T-cell (primary cell): ENCODE measurements at regions of chr5 and their contacts with region 1.

Region 1: DNA sequence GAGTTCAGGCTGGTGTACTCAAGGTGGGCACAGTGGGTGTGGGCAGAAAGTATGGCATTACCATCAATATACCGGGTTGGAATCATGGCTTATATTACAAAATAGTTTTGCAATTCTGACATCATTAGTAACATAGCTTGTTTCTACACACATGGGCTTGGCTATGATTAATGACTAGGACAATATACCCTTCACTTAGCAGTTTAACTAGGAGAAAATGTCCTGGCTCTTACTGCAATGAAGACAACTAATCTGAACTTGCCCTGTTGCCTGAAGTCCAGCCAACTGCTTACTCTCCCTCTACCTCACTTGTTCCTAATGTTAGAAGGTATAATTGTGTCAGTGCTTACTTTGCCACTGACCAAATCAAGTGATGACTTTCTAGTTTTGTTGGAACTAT is 612.5 kb downstream of the EFNA5 start:
- DNase-seq: no peak
- ATAC-seq: no peak
- H3K4me3 ChIP-seq: no peak overlapping the region
- H3K4me3 Mint-ChIP-seq: no peak overlapping the region
- H3K27ac ChIP-seq: no peak overlapping the region
- H3K27ac Mint-ChIP-seq: no peak overlapping the region
- H3K4me1 ChIP-seq: no peaks in the 10 kb centered on the region
- H3K4me1 Mint-ChIP-seq: no peaks in the 10 kb centered on the region
- H3K27me3 ChIP-seq: no peaks in the 10 kb centered on the region
- H3K27me3 Mint-ChIP-seq: no peaks in the 10 kb centered on the region

Region 2: GRCh38 chr5:106966686-106967315 is 91.4 kb before region 1 on chr5:
- CTCF ChIA-PET with region 1: no interaction called
- POLR2A ChIA-PET with region 1: no interaction called
- DNase-seq: no peak
- ATAC-seq: no peak
- H3K4me3 ChIP-seq: no peak overlapping the region
- H3K4me3 Mint-ChIP-seq: no peak overlapping the region
- H3K27ac ChIP-seq: no peak overlapping the region
- H3K27ac Mint-ChIP-seq: no peak overlapping the region
- H3K4me1 ChIP-seq: no peaks in the 10 kb centered on the region
- H3K4me1 Mint-ChIP-seq: no peaks in the 10 kb centered on the region
- H3K27me3 ChIP-seq: no peaks in the 10 kb centered on the region
- H3K27me3 Mint-ChIP-seq: no peaks in the 10 kb centered on the region

Region 3: DNA sequence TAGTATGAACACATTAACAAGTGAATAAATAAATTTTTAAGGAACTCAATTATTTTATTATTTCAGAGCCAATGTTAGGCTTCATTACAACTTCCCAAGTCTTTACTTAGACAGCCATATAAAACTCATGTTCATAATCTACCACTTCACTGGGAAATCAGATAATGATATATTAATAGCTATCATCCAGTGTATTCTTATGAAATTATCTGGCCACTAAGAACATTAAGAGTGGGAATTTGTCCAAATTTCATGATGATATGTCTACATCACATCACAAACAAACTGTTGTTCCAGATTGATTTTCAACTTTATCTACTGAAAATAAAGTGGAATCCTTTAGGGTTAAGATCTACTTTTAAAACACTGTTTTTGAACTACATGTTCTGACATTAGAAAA is 56.1 kb before region 1 on chr5:
- CTCF ChIA-PET with region 1: no interaction called
- POLR2A ChIA-PET with region 1: no interaction called
- DNase-seq: no peak
- ATAC-seq: no peak
- H3K4me3 ChIP-seq: no peak overlapping the region
- H3K4me3 Mint-ChIP-seq: no peak overlapping the region
- H3K27ac ChIP-seq: no peak overlapping the region
- H3K27ac Mint-ChIP-seq: no peak overlapping the region
- H3K4me1 ChIP-seq: no peaks in the 10 kb centered on the region
- H3K4me1 Mint-ChIP-seq: no peaks in the 10 kb centered on the region
- H3K27me3 ChIP-seq: peaks cover 0 to 9% of the 10 kb centered on the region in 2 experiments
- H3K27me3 Mint-ChIP-seq: no peaks in the 10 kb centered on the region

Region 4: GRCh38 chr5:107251151-107251550 is 192.9 kb after region 1 on chr5:
- CTCF ChIA-PET with region 1: no interaction called
- POLR2A ChIA-PET with region 1: interaction called in 1 of 2 experiments, 12 read pairs
- DNase-seq: no peak
- ATAC-seq: no peak
- H3K4me3 ChIP-seq: no peak overlapping the region
- H3K4me3 Mint-ChIP-seq: no peak overlapping the region
- H3K27ac ChIP-seq: no peak overlapping the region
- H3K27ac Mint-ChIP-seq: no peak overlapping the region
- H3K4me1 ChIP-seq: no peaks in the 10 kb centered on the region
- H3K4me1 Mint-ChIP-seq: no peaks in the 10 kb centered on the region
- H3K27me3 ChIP-seq: no peaks in the 10 kb centered on the region
- H3K27me3 Mint-ChIP-seq: peaks cover 3 to 7% of the 10 kb centered on the region in 2 donors